Sciatic nerve (tissue), 2 donors: ENCODE measurements at regions of chr19 and their contacts with region 1.

Region 1: DNA sequence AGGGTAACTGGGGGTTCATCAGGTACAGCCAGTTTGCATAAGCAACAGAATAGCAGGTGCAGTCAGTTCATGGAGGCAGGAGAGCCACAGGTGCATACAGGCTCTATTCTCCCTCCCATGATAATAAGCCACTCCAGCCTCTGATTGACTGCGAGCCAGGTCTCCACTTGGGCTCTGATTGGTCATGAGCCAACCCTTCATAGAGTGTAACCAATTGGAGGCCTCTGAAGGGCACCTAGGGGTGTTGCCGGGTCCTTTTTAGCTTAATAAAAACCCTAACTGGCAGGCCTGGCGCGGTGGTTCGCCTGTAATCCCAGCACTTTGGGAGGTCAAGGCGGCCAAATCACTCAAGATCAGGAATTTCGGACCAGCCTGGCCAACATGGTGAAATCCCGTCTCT is 8.7 kb upstream of the CKM start:
- DNase-seq: no peak
- ATAC-seq: no peak

Region 2: DNA sequence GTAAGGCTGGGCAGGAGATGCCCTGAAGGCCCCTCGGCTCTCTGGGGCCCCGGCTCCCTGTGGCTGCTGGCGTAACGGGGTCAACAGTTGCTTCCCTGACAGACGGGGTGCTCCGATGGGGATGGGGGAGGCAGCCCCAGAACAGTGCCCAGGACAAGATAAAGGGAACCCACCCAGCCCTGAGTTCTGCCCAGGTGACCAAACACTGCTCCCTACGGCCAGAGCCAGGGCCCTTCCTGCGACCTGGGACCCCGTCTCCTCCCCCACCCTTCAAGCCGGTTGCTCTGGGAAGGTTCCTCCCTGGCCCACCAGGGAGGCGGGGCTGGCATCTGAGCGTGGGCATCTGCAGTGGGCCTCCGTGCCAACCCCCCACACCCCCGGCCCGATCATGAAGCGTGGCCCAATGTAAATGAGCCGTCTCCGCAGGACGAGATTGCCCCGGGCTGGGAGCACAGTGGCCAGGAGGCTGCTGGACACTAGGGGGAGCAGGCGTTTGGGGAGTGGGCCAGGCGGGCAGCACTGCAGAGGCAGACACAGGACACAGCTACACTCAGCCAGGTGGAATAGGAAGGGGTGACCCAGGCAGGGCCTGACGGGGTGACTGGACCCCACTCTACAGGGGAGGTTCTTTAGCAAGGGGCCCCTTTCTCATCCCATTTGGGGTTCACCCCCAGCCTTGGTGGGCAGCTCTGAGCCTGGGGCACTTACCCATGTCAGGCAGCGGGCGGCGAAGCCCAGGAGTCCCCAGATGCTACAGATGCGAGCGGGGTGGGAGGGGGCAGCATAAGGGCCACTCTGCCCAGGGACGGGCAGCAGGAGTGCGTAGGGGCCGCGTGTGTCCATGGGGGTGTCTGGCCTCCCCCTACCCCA is 169.4 kb before region 1 on chr19:
- intact Hi-C with region 1: no loop called
- DNase-seq: no peak
- ATAC-seq: peak; percentile 53

Region 3: GRCh38 chr19:45187421-45188100 is 143.9 kb before region 1 on chr19:
- intact Hi-C with region 1: loop called (anchors 10 kb)
- DNase-seq: no peak
- ATAC-seq: no peak